ENCODE measurements at regions of chr7 and their contacts with region 1.

Region 1: DNA sequence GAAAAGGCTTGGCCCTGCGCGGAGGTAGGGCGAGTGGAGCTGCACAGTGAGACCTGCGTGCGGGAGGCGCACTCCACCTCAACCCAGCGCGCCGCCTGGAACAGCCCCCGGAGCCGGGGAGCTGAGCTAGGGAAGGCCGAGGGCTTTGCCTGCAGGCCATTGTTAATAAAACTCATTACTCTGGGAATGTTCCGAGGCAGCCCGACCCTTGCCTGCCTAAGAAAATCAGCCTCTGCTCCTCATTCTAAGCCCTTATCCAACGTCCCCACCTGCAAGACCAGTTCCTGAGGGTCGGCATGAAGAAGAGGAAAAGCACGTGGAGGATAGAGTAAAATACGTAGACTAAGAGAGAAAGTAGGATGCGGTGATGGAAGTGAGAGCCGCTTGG is 55.3 kb downstream of the C7orf25 start:
- DNase-seq: no peak
- ATAC-seq: peak; percentile 52
- H3K4me3 ChIP-seq: peak overlapping the region; percentile 74
- H3K27ac ChIP-seq: no peak overlapping the region
- H3K4me1 ChIP-seq: peaks cover 16% of the 10 kb centered on the region
- H3K27me3 ChIP-seq: no peaks in the 10 kb centered on the region
- CTCF ChIP-seq: no peak

Region 2: DNA sequence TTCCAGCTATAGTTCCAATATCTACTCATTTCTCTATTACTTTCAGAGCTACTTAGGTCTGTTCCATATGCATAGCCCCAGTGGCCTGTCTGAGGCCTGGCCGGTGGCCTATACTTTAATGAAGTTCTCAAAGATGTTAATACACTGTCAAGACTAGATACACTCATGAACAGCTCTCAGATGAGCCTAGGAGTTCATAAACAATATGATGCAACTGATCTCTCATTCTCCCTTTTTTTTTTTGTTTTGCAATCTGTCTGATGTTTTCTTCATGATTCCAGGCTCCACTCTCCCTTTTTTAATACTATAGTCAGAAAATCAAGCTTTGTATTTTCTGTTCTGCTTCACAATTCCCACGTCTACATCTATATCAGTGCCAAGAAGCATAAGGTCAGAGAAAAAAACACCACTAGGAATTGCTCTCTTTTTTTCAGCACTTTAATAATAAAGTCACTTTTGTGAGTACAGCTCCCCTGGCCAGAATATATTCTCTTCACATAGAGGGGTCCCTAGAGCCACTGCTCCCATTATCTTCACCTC is 265.8 kb before region 1 on chr7:
- CTCF ChIA-PET with region 1: interaction called, 12 read pairs
- POLR2A ChIA-PET with region 1: no interaction called
- intact Hi-C with region 1: no loop called
- DNase-seq: no peak
- ATAC-seq: no peak
- H3K4me3 ChIP-seq: no peak overlapping the region
- H3K27ac ChIP-seq: no peak overlapping the region
- H3K4me1 ChIP-seq: no peaks in the 10 kb centered on the region
- H3K27me3 ChIP-seq: no peaks in the 10 kb centered on the region
- CTCF ChIP-seq: no peak

Region 3: GRCh38 chr7:42893346-42894242 is 37.0 kb after region 1 on chr7:
- CTCF ChIA-PET with region 1: no interaction called
- POLR2A ChIA-PET with region 1: no interaction called
- intact Hi-C with region 1: no loop called
- DNase-seq: no peak
- ATAC-seq: no peak
- H3K4me3 ChIP-seq: no peak overlapping the region
- H3K27ac ChIP-seq: no peak overlapping the region
- H3K4me1 ChIP-seq: peaks cover 4% of the 10 kb centered on the region; the same call in 1 of the 2 replicates
- H3K27me3 ChIP-seq: no peaks in the 10 kb centered on the region
- CTCF ChIP-seq: no peak

Measured in PC-3 (cell line).